ENCODE measurements at regions of chr6 and their contacts with region 1.

Region 1: DNA sequence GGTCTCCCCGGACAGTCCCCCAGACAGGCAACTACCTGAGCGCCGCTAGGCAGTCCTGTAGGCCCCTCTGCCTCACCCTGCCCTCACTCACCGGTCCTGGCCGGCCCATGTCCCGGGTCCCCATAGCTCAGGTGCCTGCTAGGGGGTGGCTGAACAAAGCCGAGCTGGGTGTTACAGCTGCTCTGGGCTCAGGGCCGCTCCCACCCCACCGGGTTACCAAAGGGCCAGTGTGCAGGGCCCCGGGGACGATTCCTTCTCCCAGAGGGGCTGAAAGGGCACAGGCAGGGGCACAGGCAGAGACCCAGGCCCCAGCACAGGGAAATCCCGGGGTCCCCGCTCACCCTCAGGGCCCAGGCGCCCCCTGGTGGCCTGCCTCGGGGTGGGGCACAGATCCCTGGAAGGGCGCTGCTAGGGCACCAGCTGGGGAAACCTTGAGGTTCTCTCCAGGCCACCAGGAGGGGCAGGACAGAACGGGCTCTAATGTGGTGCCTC is 118.4 kb downstream of the GRM4 start:
- DNase-seq: no peak
- ATAC-seq: peak; percentile 90
- H3K4me3 ChIP-seq: no peak overlapping the region
- H3K27ac ChIP-seq: no peak overlapping the region
- H3K4me1 ChIP-seq: peaks cover 6% of the 10 kb centered on the region
- H3K27me3 ChIP-seq: peaks cover 0 to 1% of the 10 kb centered on the region in 2 experiments; a peak in 3 of 4 replicates
- CTCF ChIP-seq: peak; percentile 58 to 84 (median 70)
- EP300 ChIP-seq: no peak
- POLR2A ChIP-seq: no peak
- RAD21 ChIP-seq: peak; percentile 72

Region 2: DNA sequence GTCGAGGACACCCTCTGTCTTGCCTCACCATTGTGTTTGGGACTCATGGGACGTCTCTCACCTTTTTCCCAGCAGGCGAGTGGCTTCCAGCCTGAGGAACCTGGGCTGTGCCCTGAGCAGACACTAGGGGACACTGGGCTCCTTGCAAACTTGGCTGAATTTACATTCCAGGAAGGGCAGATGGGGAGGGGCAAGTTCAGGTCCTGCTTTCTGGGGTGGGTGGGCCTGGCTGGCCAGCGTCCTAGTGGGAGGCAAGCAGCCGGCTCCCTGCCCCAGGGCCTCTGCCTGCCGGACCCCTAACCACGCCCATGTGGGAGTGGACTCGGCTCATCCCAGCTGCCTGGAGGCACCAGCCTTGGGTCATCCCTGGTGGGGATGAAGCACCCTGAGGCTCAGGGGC is 175.5 kb before region 1 on chr6:
- CTCF ChIA-PET with region 1: no interaction called
- POLR2A ChIA-PET with region 1: no interaction called
- RAD21 ChIA-PET with region 1: no interaction called
- SMC1A ChIA-PET with region 1: no interaction called
- in situ Hi-C with region 1: no loop called
- intact Hi-C with region 1: loop called (anchors 1 kb)
- DNase-seq: no peak
- ATAC-seq: peak; percentile 32; the same call in 1 of the 3 replicates
- H3K4me3 ChIP-seq: no peak overlapping the region
- H3K27ac ChIP-seq: no peak overlapping the region
- H3K4me1 ChIP-seq: peaks cover 15% of the 10 kb centered on the region
- H3K27me3 ChIP-seq: peaks cover 0 to 2% of the 10 kb centered on the region in 2 experiments; a peak in 3 of 4 replicates
- CTCF ChIP-seq: peak; percentile 45 to 53 (median 52); a peak in 5 of 6 replicates
- EP300 ChIP-seq: no peak
- POLR2A ChIP-seq: no peak
- RAD21 ChIP-seq: peak; percentile 58

Measured in GM12878 (cell line).